Activated T-helper 1 cell treated with anti-CD3 and anti-CD28 coated beads, Interleukin-12 subunit alpha, Interleukin-12 subunit beta, Interleukin-2, Interleukin-4 antibody, amounts not matched to agents 30 ng/mL and 10 ng/mL and 1 ng/mL, durations not matched to agents 14 hours and 24 hours and 36 hours (primary cell): ENCODE measurements at regions of chr10 and their contacts with region 1.

Region 1: GRCh38 chr10:113678690-113679462 is 836 bp upstream of the CASP7 start:
- DNase-seq: peak; percentile 66
- H3K4me3 Mint-ChIP-seq: peak overlapping the region; percentile 99
- H3K27ac Mint-ChIP-seq: peak overlapping the region; percentile 98
- H3K4me1 Mint-ChIP-seq: peaks cover 44% of the 10 kb centered on the region
- H3K27me3 Mint-ChIP-seq: peaks cover 9% of the 10 kb centered on the region

Region 2: DNA sequence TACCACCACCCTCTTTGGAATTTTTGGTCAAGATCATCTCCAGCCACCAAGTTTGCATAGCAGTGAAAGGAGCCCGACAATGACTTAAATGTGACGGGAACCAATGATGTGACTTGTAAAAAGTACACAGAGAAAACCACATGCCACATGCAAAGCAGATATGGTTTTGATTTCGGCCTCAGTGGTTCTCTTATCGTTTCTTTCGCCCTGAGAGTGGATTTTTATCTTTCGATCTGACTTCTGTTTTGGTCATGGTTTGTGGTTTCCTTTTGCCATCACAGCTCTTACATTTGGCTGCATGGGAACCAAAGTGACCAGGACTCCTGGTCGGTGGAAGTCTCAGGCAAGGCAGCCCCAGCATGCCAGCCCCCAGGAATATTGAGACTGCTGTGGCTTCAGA is 697.3 kb before region 1 on chr10:
- intact Hi-C with region 1: loop called (anchors 10 kb)
- DNase-seq: peak; percentile 8
- H3K4me3 Mint-ChIP-seq: no peak overlapping the region
- H3K27ac Mint-ChIP-seq: peak overlapping the region; percentile 75
- H3K4me1 Mint-ChIP-seq: peaks cover 9% of the 10 kb centered on the region
- H3K27me3 Mint-ChIP-seq: peaks cover 74% of the 10 kb centered on the region

Region 3: DNA sequence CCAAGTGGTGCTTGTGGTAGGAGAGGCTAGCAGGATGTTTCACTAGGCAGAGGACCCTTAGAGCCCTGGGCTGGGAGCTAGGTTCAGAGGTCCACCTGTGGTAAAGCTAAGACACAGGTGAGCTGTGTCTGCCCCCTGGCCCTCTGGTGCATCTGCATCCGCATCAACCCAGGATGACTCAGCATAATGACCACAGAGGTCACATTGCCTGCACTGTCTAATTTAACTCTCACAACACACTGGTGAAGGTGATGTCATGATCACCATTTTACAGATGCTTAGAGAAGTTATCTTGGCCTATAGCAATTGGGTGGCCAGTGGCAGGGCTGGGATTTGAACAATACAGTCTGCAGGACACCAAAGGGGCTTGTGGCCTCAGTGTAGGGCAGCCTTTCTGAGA is 92.9 kb before region 1 on chr10:
- intact Hi-C with region 1: no loop called
- DNase-seq: no peak
- H3K4me3 Mint-ChIP-seq: no peak overlapping the region
- H3K27ac Mint-ChIP-seq: no peak overlapping the region
- H3K4me1 Mint-ChIP-seq: no peaks in the 10 kb centered on the region
- H3K27me3 Mint-ChIP-seq: peaks cover 3% of the 10 kb centered on the region

Region 4: GRCh38 chr10:113735921-113736320 is 57.0 kb after region 1 on chr10:
- intact Hi-C with region 1: no loop called
- DNase-seq: no peak
- H3K4me3 Mint-ChIP-seq: no peak overlapping the region
- H3K27ac Mint-ChIP-seq: no peak overlapping the region
- H3K4me1 Mint-ChIP-seq: no peaks in the 10 kb centered on the region
- H3K27me3 Mint-ChIP-seq: peaks cover 2% of the 10 kb centered on the region

Region 5: DNA sequence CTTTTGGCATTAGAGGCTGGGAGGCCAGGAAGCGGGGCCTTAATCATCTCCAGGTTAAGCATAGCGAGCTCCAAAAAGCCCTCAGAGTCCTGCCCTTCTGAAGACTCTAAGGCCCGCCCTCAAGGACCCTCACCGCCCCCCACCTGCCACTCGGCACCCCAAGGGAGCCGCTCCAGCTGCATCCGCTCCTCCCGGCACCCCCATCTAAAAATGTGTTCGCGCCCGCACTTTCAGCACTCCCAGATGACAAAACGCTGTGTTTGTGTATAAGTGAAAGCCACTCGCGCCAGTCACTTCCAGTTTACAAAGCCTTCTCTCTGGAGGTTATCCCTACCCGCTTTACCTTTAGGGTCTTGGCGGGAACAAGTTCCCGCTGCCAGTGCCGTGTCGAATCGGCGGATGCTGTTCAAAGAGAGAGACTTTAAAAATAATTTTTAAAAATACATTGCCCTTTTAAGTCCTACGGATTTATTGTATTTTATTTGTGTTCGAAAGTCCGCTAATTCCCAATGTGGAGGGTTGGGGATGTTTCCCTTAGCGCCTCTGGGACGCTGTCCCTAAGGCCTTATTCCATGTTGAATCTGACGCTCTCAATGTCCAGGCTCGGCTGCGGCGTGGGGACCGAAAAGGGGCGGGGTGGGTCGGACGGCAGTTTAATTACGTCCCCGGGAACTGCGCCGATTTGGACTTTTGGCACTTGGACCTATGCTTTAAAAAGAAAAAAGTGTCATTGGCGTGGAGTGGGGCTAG is 175.3 kb after region 1 on chr10 and contains the starts of genes DCLRE1A and NHLRC2:
- intact Hi-C with region 1: loop called (anchors 1 kb)
- DNase-seq: peak; percentile 45
- H3K4me3 Mint-ChIP-seq: peak within 1 kb of the TSS; percentile 98
- H3K27ac Mint-ChIP-seq: peak within 1 kb of the TSS; percentile 93
- H3K4me1 Mint-ChIP-seq: peaks cover 51% of the 10 kb centered on the region
- H3K27me3 Mint-ChIP-seq: no peaks in the 10 kb centered on the region
- total RNA-seq, gene DCLRE1A: 14.4 and 16.0 TPM in 2 replicates
- total RNA-seq, gene NHLRC2: 28.2 and 28.9 TPM in 2 replicates

Region 6: GRCh38 chr10:114103284-114103683 is 424.4 kb after region 1 on chr10:
- intact Hi-C with region 1: loop called (anchors 2 kb)
- DNase-seq: no peak
- H3K4me3 Mint-ChIP-seq: no peak overlapping the region
- H3K27ac Mint-ChIP-seq: no peak overlapping the region
- H3K4me1 Mint-ChIP-seq: peaks cover 21% of the 10 kb centered on the region
- H3K27me3 Mint-ChIP-seq: peaks cover 47% of the 10 kb centered on the region

Region 7: DNA sequence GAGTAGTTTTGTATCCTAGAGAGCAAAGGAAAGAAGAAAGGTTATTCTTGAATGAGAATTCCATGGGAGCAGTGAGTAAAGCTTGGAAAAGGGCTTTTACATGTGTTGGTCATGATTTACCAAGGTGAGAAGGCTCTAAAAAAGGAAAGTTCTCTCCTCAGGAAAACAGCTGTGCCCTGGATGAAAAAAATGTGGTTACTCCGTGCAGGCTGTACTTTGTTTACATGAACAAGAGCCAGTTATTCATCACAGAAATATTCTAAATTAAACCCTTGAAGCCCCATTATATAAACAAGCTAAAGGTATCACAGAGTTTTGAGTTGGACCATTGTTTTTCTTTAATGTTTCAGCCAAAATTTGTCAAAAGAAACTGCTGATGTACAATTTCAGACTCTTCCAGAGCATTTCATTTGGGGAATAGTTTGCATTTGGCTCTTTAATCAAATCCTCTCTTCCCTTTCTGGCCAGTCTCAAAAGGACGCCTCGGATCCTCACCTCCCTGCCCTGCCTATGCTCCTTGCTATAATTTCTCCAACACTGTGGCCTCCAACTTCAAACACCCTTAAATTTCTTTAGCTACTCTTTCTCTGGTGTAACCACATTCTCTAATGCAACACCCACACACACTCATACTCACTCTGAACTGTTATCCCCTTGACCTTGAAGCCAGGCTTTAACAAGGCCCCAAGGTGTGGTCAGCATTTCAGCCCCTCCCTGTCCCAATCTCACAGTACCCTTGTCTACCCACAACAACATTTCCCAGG is 678.1 kb after region 1 on chr10:
- intact Hi-C with region 1: no loop called
- DNase-seq: no peak
- H3K4me3 Mint-ChIP-seq: no peak overlapping the region
- H3K27ac Mint-ChIP-seq: no peak overlapping the region
- H3K4me1 Mint-ChIP-seq: peaks cover 16% of the 10 kb centered on the region
- H3K27me3 Mint-ChIP-seq: peaks cover 12% of the 10 kb centered on the region

Region 8: GRCh38 chr10:114541081-114541796 is 862.4 kb after region 1 on chr10:
- intact Hi-C with region 1: loop called (anchors 1 kb)
- DNase-seq: peak; percentile 74
- H3K4me3 Mint-ChIP-seq: peak overlapping the region; percentile 61
- H3K27ac Mint-ChIP-seq: peak overlapping the region; percentile 90
- H3K4me1 Mint-ChIP-seq: peaks cover 82% of the 10 kb centered on the region
- H3K27me3 Mint-ChIP-seq: no peaks in the 10 kb centered on the region